ENCODE measurements at regions of chr10 and their contacts with region 1.

Region 1: DNA sequence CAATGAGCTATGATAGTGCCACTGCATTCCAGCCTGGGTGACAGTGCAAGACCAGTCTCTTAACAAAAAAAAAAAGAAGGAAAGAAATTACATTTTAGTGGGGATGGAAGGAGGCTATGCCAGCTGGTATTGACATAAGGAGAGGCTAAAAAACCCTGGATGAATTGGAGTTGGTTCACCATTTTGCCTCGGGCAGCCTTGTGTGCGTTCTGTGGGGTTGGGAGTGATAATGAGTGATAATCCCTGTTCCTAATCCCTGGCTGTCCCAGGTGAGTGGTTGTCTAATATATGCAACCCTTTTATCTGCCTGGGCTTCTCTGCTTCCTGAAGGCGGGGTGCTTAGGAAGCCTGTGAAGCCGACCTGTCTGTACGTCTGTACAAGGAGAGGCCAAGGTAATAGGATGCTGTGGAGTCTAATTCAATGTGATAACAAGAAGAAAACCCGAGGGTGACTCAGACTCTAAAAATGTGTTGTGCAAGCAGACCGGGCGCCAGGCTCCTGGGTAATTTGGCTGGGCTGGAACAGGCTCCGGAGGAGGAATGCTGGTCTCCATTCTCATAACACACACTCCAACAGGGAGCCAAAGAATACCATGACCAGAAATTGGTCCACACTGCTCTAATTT is 43.5 kb downstream of the THNSL1 start:
- DNase-seq: peak; percentile 79
- ATAC-seq: peak; percentile 79
- H3K4me3 ChIP-seq: peak overlapping the region in 1 of 2 experiments; percentile 44; a peak in 2 of 4 replicates
- H3K27ac ChIP-seq: peak overlapping the region; percentile 42
- H3K4me1 ChIP-seq: peaks cover 31 to 53% of the 10 kb centered on the region in 2 experiments
- H3K27me3 ChIP-seq: no peaks in the 10 kb centered on the region
- CTCF ChIP-seq: no peak
- POLR2A ChIP-seq: no peak
- RAD21 ChIP-seq: no peak

Region 2: DNA sequence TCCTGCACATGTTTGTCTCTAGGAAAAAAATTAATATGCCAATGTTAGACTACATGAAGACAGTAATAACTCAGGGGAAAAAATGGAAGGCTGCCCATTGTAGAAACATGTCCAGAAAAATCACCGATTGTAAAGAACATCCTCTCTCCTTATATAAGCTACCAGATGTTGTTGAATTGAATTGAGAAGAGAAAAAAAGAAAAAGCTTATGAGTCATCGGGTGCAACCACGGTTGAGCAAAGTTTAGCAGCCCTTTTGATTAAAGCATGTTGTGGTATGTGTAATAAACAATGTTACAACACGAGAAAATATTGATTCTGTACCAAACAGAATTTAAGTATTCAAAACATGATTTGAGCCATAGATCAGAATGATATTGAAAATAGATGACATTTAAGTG is 233.9 kb before region 1 on chr10:
- CTCF ChIA-PET with region 1: no interaction called
- POLR2A ChIA-PET with region 1: no interaction called
- RAD21 ChIA-PET with region 1: no interaction called
- intact Hi-C with region 1: loop called (anchors 10 kb)
- DNase-seq: no peak
- ATAC-seq: no peak
- H3K4me3 ChIP-seq: peak overlapping the region in 1 of 2 experiments; percentile 14; a peak in 1 of 4 replicates
- H3K27ac ChIP-seq: no peak overlapping the region
- H3K4me1 ChIP-seq: peaks cover 7 to 24% of the 10 kb centered on the region in 2 experiments; a peak in 3 of 4 replicates
- H3K27me3 ChIP-seq: no peaks in the 10 kb centered on the region
- CTCF ChIP-seq: no peak
- POLR2A ChIP-seq: no peak
- RAD21 ChIP-seq: no peak

Region 3: DNA sequence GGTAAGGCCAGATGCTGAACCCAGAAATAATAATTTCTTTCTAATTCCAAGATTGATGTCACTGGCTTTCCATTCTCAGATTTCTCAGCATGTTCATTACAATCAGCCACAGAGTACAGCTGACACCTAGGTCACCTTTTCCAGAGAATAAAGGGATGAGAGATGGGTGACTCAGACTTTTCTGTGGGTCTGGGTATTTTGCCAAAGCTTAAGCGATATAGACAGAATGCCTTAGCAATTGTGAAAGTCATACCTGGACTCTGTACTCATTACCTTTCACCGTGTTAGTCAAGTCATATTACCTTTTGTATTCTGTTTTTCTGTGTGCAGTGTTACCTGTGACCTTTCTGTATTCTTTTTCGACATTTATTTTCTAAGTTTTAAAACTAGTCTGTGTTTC is 96.9 kb before region 1 on chr10:
- CTCF ChIA-PET with region 1: no interaction called
- POLR2A ChIA-PET with region 1: no interaction called
- RAD21 ChIA-PET with region 1: no interaction called
- intact Hi-C with region 1: loop called (anchors 5 kb)
- DNase-seq: peak; percentile 90
- ATAC-seq: peak; percentile 93
- H3K4me3 ChIP-seq: peak overlapping the region in 1 of 2 experiments; percentile 34; a peak in 2 of 4 replicates
- H3K27ac ChIP-seq: peak overlapping the region; percentile 30; the same call in 1 of the 2 replicates
- H3K4me1 ChIP-seq: peaks cover 21 to 42% of the 10 kb centered on the region in 2 experiments
- H3K27me3 ChIP-seq: no peaks in the 10 kb centered on the region
- CTCF ChIP-seq: no peak
- POLR2A ChIP-seq: no peak
- RAD21 ChIP-seq: peak; percentile 44

Region 4: GRCh38 chr10:25016376-25017154 is 43.3 kb before region 1 on chr10 and contains the start of gene THNSL1:
- CTCF ChIA-PET with region 1: no interaction called
- POLR2A ChIA-PET with region 1: interaction called, 3 read pairs
- RAD21 ChIA-PET with region 1: no interaction called
- intact Hi-C with region 1: loop called (anchors 2 kb)
- DNase-seq: peak; percentile 97
- ATAC-seq: peak; percentile 97
- H3K4me3 ChIP-seq: peak within 1 kb of the TSS; percentile 55 to 61
- H3K27ac ChIP-seq: peak within 1 kb of the TSS; percentile 92
- H3K4me1 ChIP-seq: peaks cover 10 to 29% of the 10 kb centered on the region in 2 experiments; a peak in 3 of 4 replicates
- H3K27me3 ChIP-seq: no peaks in the 10 kb centered on the region
- CTCF ChIP-seq: no peak
- POLR2A ChIP-seq: peak; percentile 72
- RAD21 ChIP-seq: no peak
- total RNA-seq, gene THNSL1: 7.7 TPM

Region 5: GRCh38 chr10:25206693-25207414 is 147.0 kb after region 1 on chr10:
- CTCF ChIA-PET with region 1: no interaction called
- POLR2A ChIA-PET with region 1: no interaction called
- RAD21 ChIA-PET with region 1: no interaction called
- intact Hi-C with region 1: no loop called
- DNase-seq: no peak
- ATAC-seq: no peak
- H3K4me3 ChIP-seq: no peak overlapping the region
- H3K27ac ChIP-seq: no peak overlapping the region
- H3K4me1 ChIP-seq: no peaks in the 10 kb centered on the region
- H3K27me3 ChIP-seq: no peaks in the 10 kb centered on the region
- CTCF ChIP-seq: no peak
- POLR2A ChIP-seq: no peak
- RAD21 ChIP-seq: no peak